ENCODE measurements at regions of chr7 and their contacts with region 1.

Region 1: GRCh38 chr7:28239823-28240204 is 59.2 kb upstream of the JAZF1 start:
- DNase-seq: peak; percentile 12
- H3K4me3 Mint-ChIP-seq: no peak overlapping the region
- H3K27ac Mint-ChIP-seq: no peak overlapping the region
- H3K4me1 Mint-ChIP-seq: peaks cover 9% of the 10 kb centered on the region
- H3K27me3 Mint-ChIP-seq: peaks cover 43% of the 10 kb centered on the region

Region 2: GRCh38 chr7:28078036-28078901 is 161.5 kb before region 1 on chr7:
- CTCF ChIA-PET with region 1: no interaction called
- POLR2A ChIA-PET with region 1: no interaction called
- intact Hi-C with region 1: no loop called
- DNase-seq: peak; percentile 60
- H3K4me3 Mint-ChIP-seq: no peak overlapping the region
- H3K27ac Mint-ChIP-seq: no peak overlapping the region
- H3K4me1 Mint-ChIP-seq: peaks cover 5% of the 10 kb centered on the region
- H3K27me3 Mint-ChIP-seq: no peaks in the 10 kb centered on the region

Region 3: DNA sequence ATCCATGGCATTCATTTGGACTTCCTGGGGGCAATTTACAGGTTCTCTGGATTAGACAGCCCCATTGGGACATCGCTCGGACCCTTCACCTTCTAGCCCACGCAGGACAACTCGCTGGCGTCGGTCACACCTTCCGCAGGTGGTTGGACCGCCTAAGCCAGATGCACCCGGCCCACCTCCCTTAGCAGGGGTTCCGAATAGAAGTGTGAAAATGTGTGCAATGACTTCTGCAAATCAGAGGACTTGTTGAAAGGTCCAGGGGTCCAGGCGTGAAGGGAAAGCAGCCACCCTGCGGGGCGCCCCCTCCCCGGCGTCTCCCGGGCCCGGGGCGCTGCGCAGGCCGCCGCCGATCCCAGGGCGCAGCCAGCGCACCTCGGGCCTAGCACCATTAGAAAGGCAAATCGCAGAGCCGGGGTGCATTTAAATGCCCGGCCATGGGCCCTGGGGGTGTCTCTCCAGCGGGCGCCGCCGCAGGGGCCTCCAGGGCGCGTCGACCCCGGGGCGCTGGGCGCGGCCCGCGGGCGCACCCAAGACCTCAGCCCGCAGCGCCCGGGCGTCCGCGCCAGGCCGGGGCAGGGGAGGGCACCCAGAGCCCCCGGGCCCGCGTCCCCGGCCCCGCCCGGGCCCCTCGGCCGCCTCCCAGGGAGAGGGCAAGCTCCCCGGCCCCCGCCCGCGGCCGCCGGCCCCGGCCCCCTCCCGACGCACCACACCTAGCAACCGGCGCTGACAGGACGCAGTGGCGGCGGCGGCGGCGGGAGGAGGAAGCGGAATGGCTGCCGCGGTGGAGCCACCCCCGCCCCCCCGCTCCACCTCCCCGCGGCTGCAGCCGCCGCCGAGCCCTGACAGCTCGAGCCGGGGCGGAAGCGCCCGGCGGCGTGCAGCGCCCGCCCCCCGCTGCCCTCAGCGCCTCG is 60.4 kb before region 1 on chr7:
- CTCF ChIA-PET with region 1: no interaction called
- POLR2A ChIA-PET with region 1: no interaction called
- intact Hi-C with region 1: loop called (anchors 2 kb)
- DNase-seq: peak; percentile 79
- H3K4me3 Mint-ChIP-seq: peak overlapping the region; percentile 70
- H3K27ac Mint-ChIP-seq: peak overlapping the region; percentile 26
- H3K4me1 Mint-ChIP-seq: peaks cover 32% of the 10 kb centered on the region
- H3K27me3 Mint-ChIP-seq: peaks cover 7% of the 10 kb centered on the region

Region 4: DNA sequence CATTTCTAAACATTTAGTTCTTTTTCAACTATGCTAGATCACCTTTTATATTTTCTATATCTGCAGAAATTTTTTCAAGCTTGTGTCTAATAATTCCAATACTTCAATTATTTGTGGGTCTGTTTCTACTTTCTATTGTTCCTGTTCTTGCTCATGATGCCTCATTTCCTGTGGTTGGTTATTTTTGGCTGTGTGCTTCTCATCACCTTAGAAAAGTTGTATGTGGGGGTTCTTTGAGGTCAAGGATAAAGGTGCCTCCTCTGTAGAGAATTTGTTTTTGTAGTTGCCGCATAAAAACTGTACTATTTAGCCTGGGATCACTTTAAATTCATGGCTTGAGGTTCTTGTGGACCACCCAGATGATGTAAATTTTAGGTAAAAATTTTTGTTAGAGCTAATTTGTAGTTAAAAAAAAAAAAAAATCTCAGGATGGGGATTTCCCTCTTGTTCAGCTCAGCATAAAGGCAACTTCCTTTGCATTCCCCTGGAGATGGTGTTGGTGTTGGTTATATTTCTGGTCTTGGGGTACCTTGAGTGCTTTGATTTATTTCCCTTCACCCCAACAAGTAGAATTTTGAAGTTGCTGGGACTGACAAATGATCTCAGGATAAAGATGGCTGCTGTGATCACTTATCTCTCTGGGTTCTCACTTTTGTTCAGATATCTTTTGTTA is 32.2 kb before region 1 on chr7:
- CTCF ChIA-PET with region 1: no interaction called
- POLR2A ChIA-PET with region 1: interaction called, 3 read pairs
- intact Hi-C with region 1: loop called (anchors 1 kb)
- DNase-seq: no peak
- H3K4me3 Mint-ChIP-seq: no peak overlapping the region
- H3K27ac Mint-ChIP-seq: no peak overlapping the region
- H3K4me1 Mint-ChIP-seq: peaks cover 32% of the 10 kb centered on the region
- H3K27me3 Mint-ChIP-seq: peaks cover 19% of the 10 kb centered on the region

Region 5: GRCh38 chr7:28272461-28272877 is 32.7 kb after region 1 on chr7:
- CTCF ChIA-PET with region 1: no interaction called
- POLR2A ChIA-PET with region 1: no interaction called
- intact Hi-C with region 1: no loop called
- DNase-seq: peak; percentile 23
- H3K4me3 Mint-ChIP-seq: no peak overlapping the region
- H3K27ac Mint-ChIP-seq: no peak overlapping the region
- H3K4me1 Mint-ChIP-seq: peaks cover 7% of the 10 kb centered on the region
- H3K27me3 Mint-ChIP-seq: peaks cover 42% of the 10 kb centered on the region

Measured in activated CD4-positive, alpha-beta memory T cell treated with anti-CD3 and anti-CD28 coated beads for 36 hours (primary cell).